ENCODE measurements at regions of chr6 and their contacts with region 1.

Region 1: GRCh38 chr6:4775584-4776494 is at the start of gene CDYL:
- DNase-seq: peak; percentile 85
- ATAC-seq: peak; percentile 89
- H3K4me3 ChIP-seq: peak within 1 kb of the TSS; percentile 93
- H3K27ac ChIP-seq: peak within 1 kb of the TSS; percentile 76
- H3K4me1 ChIP-seq: no peaks in the 10 kb centered on the region; the same call in 1 of the 2 replicates
- H3K27me3 ChIP-seq: peaks cover 3% of the 10 kb centered on the region
- CTCF ChIP-seq: peak; percentile 18; the same call in 1 of the 2 replicates
- POLR2A ChIP-seq: no peak
- RAD21 ChIP-seq: peak; percentile 23; the same call in 1 of the 2 replicates
- total RNA-seq, gene CDYL: 72.2 and 92.1 TPM in 2 replicates

Region 2: DNA sequence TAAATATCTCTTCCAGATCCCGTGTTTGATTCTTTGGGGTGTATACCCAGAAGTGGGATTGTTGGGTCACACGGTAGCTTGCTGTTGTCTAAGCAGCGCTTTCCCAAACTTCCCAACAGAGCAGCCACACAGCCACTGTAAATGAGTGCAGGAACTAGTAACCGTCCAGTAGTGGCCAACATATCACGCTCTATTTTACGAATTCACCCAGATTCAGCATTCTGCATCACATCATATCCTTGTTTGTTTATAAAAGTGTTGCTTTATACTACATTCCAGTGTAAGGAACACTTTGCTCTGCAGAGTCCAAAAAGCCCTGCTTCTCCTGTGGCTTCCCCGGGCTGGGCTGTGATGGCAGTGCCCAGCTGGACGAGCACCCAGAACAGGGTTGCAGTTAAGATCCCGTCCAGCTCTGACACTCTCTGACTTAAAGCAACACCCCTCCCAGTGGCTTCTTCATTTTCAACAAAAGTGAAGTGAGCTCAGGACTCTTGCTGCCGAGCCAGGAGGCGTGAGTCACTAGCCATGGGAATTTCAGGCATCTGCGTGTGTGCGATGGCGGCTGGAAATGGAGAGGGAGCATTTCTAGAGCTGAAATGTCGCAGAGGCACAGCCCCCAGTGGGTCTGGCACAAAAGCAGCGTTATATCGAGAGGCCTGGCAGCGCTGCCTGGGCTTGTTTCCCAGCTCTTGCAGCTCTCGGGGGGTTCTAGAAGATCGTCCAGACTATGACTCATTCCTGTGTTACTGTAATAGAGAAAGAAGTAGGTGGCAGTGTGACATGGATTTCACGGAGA is 424.1 kb before region 1 on chr6:
- CTCF ChIA-PET with region 1: no interaction called
- POLR2A ChIA-PET with region 1: no interaction called
- dilution Hi-C with region 1: no loop called
- in situ Hi-C with region 1: no loop called
- intact Hi-C with region 1: loop called (anchors 1 kb)
- DNase-seq: peak; percentile 95
- ATAC-seq: peak; percentile 79
- H3K4me3 ChIP-seq: peak overlapping the region; percentile 12
- H3K27ac ChIP-seq: peak overlapping the region; percentile 59
- H3K4me1 ChIP-seq: peaks cover 27% of the 10 kb centered on the region
- H3K27me3 ChIP-seq: no peaks in the 10 kb centered on the region
- CTCF ChIP-seq: 0 out of 2 replicates have a peak, but pooled peaks have one; percentile 2
- POLR2A ChIP-seq: peak; percentile 62; the same call in 1 of the 2 replicates
- RAD21 ChIP-seq: no peak; the same call in none of the 2 replicates

Region 3: GRCh38 chr6:4647414-4648365 is 128.1 kb before region 1 on chr6:
- CTCF ChIA-PET with region 1: no interaction called
- POLR2A ChIA-PET with region 1: interaction called, 4 read pairs
- dilution Hi-C with region 1: no loop called
- in situ Hi-C with region 1: no loop called
- intact Hi-C with region 1: loop called (anchors 1 kb)
- DNase-seq: peak; percentile 84
- ATAC-seq: peak; percentile 99
- H3K4me3 ChIP-seq: peak overlapping the region; percentile 52
- H3K27ac ChIP-seq: peak overlapping the region; percentile 51
- H3K4me1 ChIP-seq: peaks cover 6% of the 10 kb centered on the region
- H3K27me3 ChIP-seq: no peaks in the 10 kb centered on the region
- CTCF ChIP-seq: no peak
- POLR2A ChIP-seq: 0 out of 2 replicates have a peak, but pooled peaks have one; percentile 32
- RAD21 ChIP-seq: peak; percentile 30; the same call in 1 of the 2 replicates

Region 4: GRCh38 chr6:4936681-4937041 is 160.8 kb after region 1 on chr6:
- CTCF ChIA-PET with region 1: no interaction called
- POLR2A ChIA-PET with region 1: no interaction called
- dilution Hi-C with region 1: no loop called
- in situ Hi-C with region 1: no loop called
- intact Hi-C with region 1: loop called (anchors 2 kb)
- DNase-seq: peak; percentile 80
- ATAC-seq: peak; percentile 69
- H3K4me3 ChIP-seq: no peak overlapping the region
- H3K27ac ChIP-seq: no peak overlapping the region
- H3K4me1 ChIP-seq: peaks cover 12% of the 10 kb centered on the region
- H3K27me3 ChIP-seq: no peaks in the 10 kb centered on the region
- CTCF ChIP-seq: peak; percentile 72
- POLR2A ChIP-seq: no peak
- RAD21 ChIP-seq: peak; percentile 76

Measured in IMR-90 (cell line).